WTC11 (cell line): ENCODE measurements at regions of chr1 and their contacts with region 1.

Region 1: GRCh38 chr1:109397538-109398342 is at the start of gene SORT1:
- DNase-seq: peak; percentile 97
- ATAC-seq: peak; percentile 99
- H3K4me3 Mint-ChIP-seq: peak within 1 kb of the TSS; percentile 95
- H3K27ac Mint-ChIP-seq: peak within 1 kb of the TSS; percentile 97
- H3K4me1 Mint-ChIP-seq: peaks cover 43% of the 10 kb centered on the region
- H3K27me3 Mint-ChIP-seq: no peaks in the 10 kb centered on the region
- CTCF ChIP-seq: no peak
- total RNA-seq, gene SORT1: 50.2 to 60.8 TPM (median 55.9 TPM) in 3 replicates

Region 2: GRCh38 chr1:109181105-109181806 is 216.5 kb before region 1 on chr1:
- CTCF ChIA-PET with region 1: no interaction called
- POLR2A ChIA-PET with region 1: no interaction called
- DNase-seq: no peak
- ATAC-seq: no peak
- H3K4me3 Mint-ChIP-seq: no peak overlapping the region
- H3K27ac Mint-ChIP-seq: no peak overlapping the region
- H3K4me1 Mint-ChIP-seq: peaks cover 4% of the 10 kb centered on the region
- H3K27me3 Mint-ChIP-seq: peaks cover 3% of the 10 kb centered on the region; the same call in 1 of the 2 replicates
- CTCF ChIP-seq: no peak

Region 3: GRCh38 chr1:109201123-109201703 is 196.5 kb before region 1 on chr1:
- CTCF ChIA-PET with region 1: interaction called, 28 read pairs
- POLR2A ChIA-PET with region 1: no interaction called
- DNase-seq: peak; percentile 77
- ATAC-seq: peak; percentile 92
- H3K4me3 Mint-ChIP-seq: no peak overlapping the region
- H3K27ac Mint-ChIP-seq: 0 out of 2 replicates have a peak overlapping the region, but pooled peaks have one; percentile 59
- H3K4me1 Mint-ChIP-seq: peaks cover 3% of the 10 kb centered on the region; the same call in 1 of the 2 replicates
- H3K27me3 Mint-ChIP-seq: no peaks in the 10 kb centered on the region; the same call in 1 of the 2 replicates
- CTCF ChIP-seq: peak; percentile 42

Region 4: DNA sequence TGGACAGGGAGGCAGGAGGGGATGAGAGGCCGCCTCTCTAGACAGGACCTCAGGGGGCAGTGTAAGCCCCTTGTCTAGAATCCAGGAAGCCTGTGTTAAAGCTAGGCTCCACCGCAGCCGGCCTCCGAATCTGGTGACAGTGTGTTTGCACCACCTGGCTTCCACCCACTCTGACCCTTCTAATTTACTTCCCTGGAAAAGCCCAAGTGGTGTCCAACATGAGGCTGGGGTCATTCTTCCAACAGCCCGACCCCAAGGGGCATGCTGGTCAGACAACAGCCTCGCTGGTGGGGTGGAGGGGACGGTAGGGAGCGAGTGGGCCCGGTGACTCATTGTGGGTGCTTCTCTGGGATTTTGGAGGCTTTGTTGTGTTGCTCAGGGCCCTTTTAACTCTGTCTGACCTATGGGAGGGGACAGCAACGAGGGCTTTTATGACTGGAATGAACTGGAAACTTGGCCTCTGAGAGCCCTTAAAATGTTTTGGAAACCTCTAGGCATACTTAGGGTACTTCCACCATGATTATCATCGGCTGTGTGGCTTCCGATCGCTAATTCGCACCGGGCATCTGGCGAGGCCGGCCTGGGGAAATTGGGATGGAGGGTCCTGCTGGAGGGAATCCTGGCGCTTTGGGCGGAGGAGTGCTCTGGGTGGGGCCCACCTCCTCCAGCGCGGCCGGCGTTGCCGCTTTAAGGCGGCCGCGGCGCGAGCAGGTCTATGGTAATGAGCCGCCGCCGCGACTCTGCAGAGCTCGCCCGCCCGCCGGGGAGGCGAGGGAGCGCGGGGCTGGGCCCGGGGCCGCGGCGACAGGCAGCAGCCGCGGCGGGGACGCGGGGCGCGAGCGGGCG is 148.7 kb before region 1 on chr1 and contains the start of gene CELSR2:
- CTCF ChIA-PET with region 1: interaction called, 24 read pairs
- POLR2A ChIA-PET with region 1: no interaction called
- DNase-seq: peak; percentile 88
- ATAC-seq: peak; percentile 84
- H3K4me3 Mint-ChIP-seq: peak within 1 kb of the TSS; percentile 63
- H3K27ac Mint-ChIP-seq: no peak within 1 kb of the TSS
- H3K4me1 Mint-ChIP-seq: peaks cover 24% of the 10 kb centered on the region
- H3K27me3 Mint-ChIP-seq: peaks cover 36% of the 10 kb centered on the region
- CTCF ChIP-seq: no peak
- total RNA-seq, gene CELSR2: 26.8 to 31.3 TPM (median 28.2 TPM) in 3 replicates

Region 5: GRCh38 chr1:109277434-109278204 is 120.1 kb before region 1 on chr1:
- CTCF ChIA-PET with region 1: interaction called, 68 read pairs
- POLR2A ChIA-PET with region 1: interaction called, 21 read pairs
- DNase-seq: peak; percentile 91
- ATAC-seq: peak; percentile 86
- H3K4me3 Mint-ChIP-seq: no peak overlapping the region
- H3K27ac Mint-ChIP-seq: peak overlapping the region; percentile 85
- H3K4me1 Mint-ChIP-seq: peaks cover 37% of the 10 kb centered on the region
- H3K27me3 Mint-ChIP-seq: no peaks in the 10 kb centered on the region; the same call in 1 of the 2 replicates
- CTCF ChIP-seq: peak; percentile 95

Region 6: DNA sequence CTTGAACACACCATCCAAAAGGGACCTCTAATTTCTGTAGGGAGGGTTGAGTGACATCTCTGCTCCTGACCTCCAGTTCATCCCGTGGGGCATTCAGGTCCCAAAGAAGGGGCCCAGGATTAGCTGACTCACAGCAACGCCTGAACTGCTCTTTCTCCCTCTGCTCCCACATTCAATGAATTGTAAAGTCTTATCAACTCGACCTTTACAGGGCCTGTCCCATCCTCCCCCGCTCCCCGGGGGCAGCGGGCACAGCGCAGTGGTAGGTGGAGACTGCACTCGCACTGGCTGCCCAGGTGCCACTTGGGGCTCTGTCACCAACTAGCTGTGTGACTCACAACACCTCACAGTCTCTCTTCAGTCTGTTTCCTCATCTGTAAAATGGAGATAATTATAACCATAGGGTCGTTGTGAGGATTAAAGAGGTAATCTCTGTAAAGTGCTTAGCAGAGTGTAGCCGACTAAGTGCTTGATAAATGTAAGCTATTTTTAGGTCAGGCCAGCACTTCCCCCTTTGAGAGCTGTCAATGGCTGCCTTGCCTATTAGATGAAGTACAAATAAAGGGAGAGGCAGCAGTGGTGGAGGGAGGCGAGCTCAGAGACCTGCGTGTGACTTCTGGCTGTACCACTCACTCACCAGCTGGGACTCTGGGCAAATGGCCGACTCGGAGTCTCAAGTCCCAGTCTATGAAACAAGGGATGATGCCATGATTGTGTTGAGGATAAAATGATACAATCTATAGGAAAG is 90.3 kb before region 1 on chr1:
- CTCF ChIA-PET with region 1: interaction called, 22 read pairs
- POLR2A ChIA-PET with region 1: interaction called, 6 read pairs
- DNase-seq: no peak
- ATAC-seq: no peak
- H3K4me3 Mint-ChIP-seq: no peak overlapping the region
- H3K27ac Mint-ChIP-seq: peak overlapping the region; percentile 66; the same call in 1 of the 2 replicates
- H3K4me1 Mint-ChIP-seq: peaks cover 17% of the 10 kb centered on the region
- H3K27me3 Mint-ChIP-seq: no peaks in the 10 kb centered on the region
- CTCF ChIP-seq: no peak

Region 7: DNA sequence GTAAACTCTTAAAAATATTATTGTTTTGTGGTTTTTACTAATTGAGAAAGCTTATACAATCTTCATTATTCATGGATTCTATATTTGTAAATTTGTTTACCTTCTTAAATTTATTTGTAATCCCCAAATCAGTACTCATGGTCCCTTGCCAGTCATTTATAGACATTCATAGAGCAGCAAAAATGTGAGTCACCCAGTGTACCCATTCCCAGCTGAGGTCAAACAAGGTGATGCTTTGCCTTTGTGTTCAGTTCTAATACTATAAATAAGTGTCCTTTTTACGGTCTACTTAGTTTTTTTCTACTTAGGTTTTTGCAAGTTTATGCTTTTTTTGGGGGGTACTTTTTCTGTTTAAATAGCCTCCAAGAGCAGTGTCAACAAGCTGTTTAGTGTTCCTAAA is 36.1 kb before region 1 on chr1:
- CTCF ChIA-PET with region 1: interaction called, 23 read pairs
- POLR2A ChIA-PET with region 1: no interaction called
- DNase-seq: no peak
- ATAC-seq: no peak
- H3K4me3 Mint-ChIP-seq: no peak overlapping the region
- H3K27ac Mint-ChIP-seq: no peak overlapping the region
- H3K4me1 Mint-ChIP-seq: peaks cover 19% of the 10 kb centered on the region
- H3K27me3 Mint-ChIP-seq: no peaks in the 10 kb centered on the region
- CTCF ChIP-seq: no peak

Region 8: GRCh38 chr1:109385417-109385816 is 12.3 kb before region 1 on chr1:
- CTCF ChIA-PET with region 1: interaction called, 23 read pairs
- POLR2A ChIA-PET with region 1: interaction called, 5 read pairs
- DNase-seq: no peak
- ATAC-seq: no peak
- H3K4me3 Mint-ChIP-seq: no peak overlapping the region
- H3K27ac Mint-ChIP-seq: 0 out of 2 replicates have a peak overlapping the region, but pooled peaks have one; percentile 32
- H3K4me1 Mint-ChIP-seq: peaks cover 33% of the 10 kb centered on the region
- H3K27me3 Mint-ChIP-seq: no peaks in the 10 kb centered on the region
- CTCF ChIP-seq: no peak

Region 9: DNA sequence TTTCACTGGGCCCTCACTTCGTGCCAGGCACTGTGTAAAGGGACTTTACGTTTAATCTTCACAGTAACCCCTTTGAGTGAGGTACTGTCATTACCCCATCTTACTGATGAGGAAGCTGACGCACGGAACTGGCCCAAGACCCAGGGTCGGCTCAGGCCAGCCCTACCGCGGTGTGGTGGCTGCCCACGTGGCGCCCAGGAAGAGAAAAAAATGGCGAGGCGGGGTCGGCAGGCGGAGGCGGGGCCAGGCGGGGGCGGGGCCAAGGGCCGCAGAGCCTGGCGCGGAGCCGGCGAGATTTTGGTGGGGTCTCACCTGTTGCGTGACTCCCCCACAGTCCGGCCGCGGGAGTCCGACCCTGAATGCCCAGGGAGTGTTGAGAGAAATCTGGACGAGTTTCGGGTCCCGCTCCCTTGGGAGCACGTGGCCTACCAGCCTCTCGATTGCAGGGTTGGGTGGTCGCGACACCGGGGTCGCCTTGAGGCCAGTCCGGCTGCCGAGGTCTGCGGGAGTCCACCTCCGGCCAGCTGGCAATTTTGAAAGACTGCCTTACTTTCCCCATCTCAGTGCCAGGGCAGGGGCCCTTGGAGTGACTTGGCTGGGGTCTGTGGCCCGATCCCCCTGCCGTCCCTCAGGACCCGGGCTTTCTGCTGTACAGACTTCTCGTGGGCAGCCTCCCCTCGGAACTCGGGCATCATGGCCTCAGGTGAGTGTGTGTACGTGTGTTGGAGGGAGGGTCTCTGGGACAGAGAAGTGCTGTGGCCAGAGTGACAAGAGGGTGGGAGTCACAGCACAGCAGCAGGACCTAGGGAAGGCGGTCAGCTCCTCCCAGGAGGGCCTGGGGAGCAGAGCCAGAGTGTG is 222.1 kb after region 1 on chr1 and contains the starts of genes AMPD2 and GNAT2:
- CTCF ChIA-PET with region 1: no interaction called
- POLR2A ChIA-PET with region 1: no interaction called
- DNase-seq: peak; percentile 76
- ATAC-seq: peak; percentile 59
- H3K4me3 Mint-ChIP-seq: peak within 1 kb of the TSS; percentile 97
- H3K27ac Mint-ChIP-seq: peak within 1 kb of the TSS; percentile 92
- H3K4me1 Mint-ChIP-seq: peaks cover 40% of the 10 kb centered on the region
- H3K27me3 Mint-ChIP-seq: no peaks in the 10 kb centered on the region
- CTCF ChIP-seq: no peak
- total RNA-seq, gene AMPD2: 51.8 to 79.8 TPM (median 60.0 TPM) in 3 replicates
- total RNA-seq, gene GNAT2: 0.14 TPM in 1 of 3 replicates, not detected in the others